Heart right ventricle (tissue), 16 donors: ENCODE measurements at regions of chr5 and their contacts with region 1.

Region 1: GRCh38 chr5:16666883-16667398 is 50.1 kb upstream of the RETREG1 start:
- DNase-seq: peak; percentile 58 to 60
- ATAC-seq: peak; percentile 73 to 91 (median 80)
- H3K4me3 ChIP-seq: peak overlapping the region in 3 of 10 donors; percentile 11 to 17 (median 15)
- H3K27ac ChIP-seq: peak overlapping the region in 8 of 10 donors; percentile 23 to 74 (median 52)
- H3K4me1 ChIP-seq: peaks cover 0 to 44% (median 26%) of the 10 kb centered on the region in 9 donors
- H3K27me3 ChIP-seq: no peaks in the 10 kb centered on the region
- CTCF ChIP-seq: peak; percentile 19 to 62 (median 45)

Region 2: DNA sequence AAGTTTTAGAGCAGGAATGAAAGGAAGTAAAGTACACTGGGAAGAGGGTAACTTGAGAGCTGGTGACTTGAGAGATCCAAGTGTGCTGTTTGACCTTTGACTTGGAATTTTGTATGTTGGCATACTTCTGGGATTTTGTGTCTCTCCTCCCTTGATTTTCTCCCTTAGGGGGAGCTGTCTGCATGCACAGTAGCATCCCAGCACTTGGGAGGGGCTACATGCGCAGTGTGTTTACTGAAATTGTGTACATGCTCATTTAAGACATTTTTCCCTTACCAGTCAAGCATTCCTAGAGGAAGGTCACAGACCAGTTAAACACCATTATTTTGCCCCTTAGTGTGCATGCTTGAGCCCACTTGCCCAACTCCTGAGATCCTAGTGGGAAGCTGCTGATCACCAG is 321.5 kb before region 1 on chr5:
- intact Hi-C with region 1: loop called in 1 of 10 experiments (anchors 10 kb)
- DNase-seq: no peak
- ATAC-seq: no peak
- H3K4me3 ChIP-seq: no peak overlapping the region
- H3K27ac ChIP-seq: no peak overlapping the region
- H3K4me1 ChIP-seq: no peaks in the 10 kb centered on the region
- H3K27me3 ChIP-seq: no peaks in the 10 kb centered on the region
- CTCF ChIP-seq: peak in 2 of 9 donors; percentile 11 to 25

Region 3: GRCh38 chr5:16465544-16466466 is 201.1 kb before region 1 on chr5 and contains the start of gene ZNF622:
- intact Hi-C with region 1: loop called in 3 of 10 experiments (anchors 2 to 5 kb)
- DNase-seq: peak; percentile 89 to 91
- ATAC-seq: peak; percentile 90 to 96 (median 94)
- H3K4me3 ChIP-seq: peak within 1 kb of the TSS; percentile 53 to 99 (median 90)
- H3K27ac ChIP-seq: peak within 1 kb of the TSS; percentile 66 to 96 (median 91)
- H3K4me1 ChIP-seq: peaks cover 3 to 88% (median 66%) of the 10 kb centered on the region in 9 donors
- H3K27me3 ChIP-seq: no peaks in the 10 kb centered on the region
- CTCF ChIP-seq: no peak
- total RNA-seq, gene ZNF622: 41.9 to 74.0 (median 54.9) TPM

Region 4: GRCh38 chr5:16508730-16509531 is 158.0 kb before region 1 on chr5:
- intact Hi-C with region 1: no loop called
- DNase-seq: peak; percentile 74 to 75
- ATAC-seq: peak; percentile 84 to 95 (median 94)
- H3K4me3 ChIP-seq: peak overlapping the region; percentile 4 to 60 (median 48)
- H3K27ac ChIP-seq: peak overlapping the region; percentile 57 to 96 (median 88)
- H3K4me1 ChIP-seq: peaks cover 0 to 25% (median 7%) of the 10 kb centered on the region in 9 donors
- H3K27me3 ChIP-seq: no peaks in the 10 kb centered on the region
- CTCF ChIP-seq: no peak

Region 5: GRCh38 chr5:16539169-16539721 is 127.7 kb before region 1 on chr5:
- intact Hi-C with region 1: loop called in 1 of 10 experiments (anchors 10 kb)
- DNase-seq: peak; percentile 73 to 75
- ATAC-seq: peak; percentile 85 to 96 (median 92)
- H3K4me3 ChIP-seq: no peak overlapping the region
- H3K27ac ChIP-seq: peak overlapping the region; percentile 51 to 94 (median 88)
- H3K4me1 ChIP-seq: peaks cover 3 to 57% (median 33%) of the 10 kb centered on the region in 9 donors
- H3K27me3 ChIP-seq: no peaks in the 10 kb centered on the region
- CTCF ChIP-seq: no peak

Region 6: GRCh38 chr5:16568875-16569580 is 97.9 kb before region 1 on chr5:
- intact Hi-C with region 1: no loop called
- DNase-seq: peak; percentile 34 to 37
- ATAC-seq: peak in 3 of 8 donors; percentile 20 to 89 (median 70)
- H3K4me3 ChIP-seq: no peak overlapping the region
- H3K27ac ChIP-seq: peak overlapping the region in 1 of 10 donors; percentile 13
- H3K4me1 ChIP-seq: peaks cover 0 to 22% (median 7%) of the 10 kb centered on the region in 9 donors
- H3K27me3 ChIP-seq: no peaks in the 10 kb centered on the region
- CTCF ChIP-seq: no peak

Region 7: GRCh38 chr5:16616536-16617273 is 50.2 kb before region 1 on chr5 and contains the start of gene RETREG1:
- intact Hi-C with region 1: no loop called
- DNase-seq: peak; percentile 68 to 76
- ATAC-seq: peak; percentile 81 to 91 (median 88)
- H3K4me3 ChIP-seq: peak within 1 kb of the TSS; percentile 59 to 94 (median 74)
- H3K27ac ChIP-seq: peak within 1 kb of the TSS; percentile 47 to 88 (median 76)
- H3K4me1 ChIP-seq: peaks cover 0 to 24% (median 12%) of the 10 kb centered on the region in 9 donors
- H3K27me3 ChIP-seq: peaks cover 0 to 15% (median 0%) of the 10 kb centered on the region in 7 donors
- CTCF ChIP-seq: no peak
- total RNA-seq, gene RETREG1: 156 to 337 (median 216) TPM

Region 8: GRCh38 chr5:16626663-16627264 is 40.2 kb before region 1 on chr5:
- intact Hi-C with region 1: loop called in 2 of 10 experiments (anchors 5 kb)
- DNase-seq: no peak
- ATAC-seq: peak in 1 of 8 donors; percentile 36
- H3K4me3 ChIP-seq: no peak overlapping the region
- H3K27ac ChIP-seq: peak overlapping the region in 1 of 10 donors; percentile 32
- H3K4me1 ChIP-seq: peaks cover 0 to 43% (median 9%) of the 10 kb centered on the region in 9 donors
- H3K27me3 ChIP-seq: no peaks in the 10 kb centered on the region
- CTCF ChIP-seq: no peak